ENCODE measurements at regions of chr11 and their contacts with region 1.

Region 1: GRCh38 chr11:95150946-95151684 is 61.5 kb downstream of the ENDOD1 start:
- DNase-seq: peak; percentile 93 to 95 (median 93)
- ATAC-seq: peak; percentile 90
- H3K4me3 ChIP-seq: peak overlapping the region; percentile 25
- H3K4me1 ChIP-seq: peaks cover 6% of the 10 kb centered on the region
- CTCF ChIP-seq: peak; percentile 56

Region 2: DNA sequence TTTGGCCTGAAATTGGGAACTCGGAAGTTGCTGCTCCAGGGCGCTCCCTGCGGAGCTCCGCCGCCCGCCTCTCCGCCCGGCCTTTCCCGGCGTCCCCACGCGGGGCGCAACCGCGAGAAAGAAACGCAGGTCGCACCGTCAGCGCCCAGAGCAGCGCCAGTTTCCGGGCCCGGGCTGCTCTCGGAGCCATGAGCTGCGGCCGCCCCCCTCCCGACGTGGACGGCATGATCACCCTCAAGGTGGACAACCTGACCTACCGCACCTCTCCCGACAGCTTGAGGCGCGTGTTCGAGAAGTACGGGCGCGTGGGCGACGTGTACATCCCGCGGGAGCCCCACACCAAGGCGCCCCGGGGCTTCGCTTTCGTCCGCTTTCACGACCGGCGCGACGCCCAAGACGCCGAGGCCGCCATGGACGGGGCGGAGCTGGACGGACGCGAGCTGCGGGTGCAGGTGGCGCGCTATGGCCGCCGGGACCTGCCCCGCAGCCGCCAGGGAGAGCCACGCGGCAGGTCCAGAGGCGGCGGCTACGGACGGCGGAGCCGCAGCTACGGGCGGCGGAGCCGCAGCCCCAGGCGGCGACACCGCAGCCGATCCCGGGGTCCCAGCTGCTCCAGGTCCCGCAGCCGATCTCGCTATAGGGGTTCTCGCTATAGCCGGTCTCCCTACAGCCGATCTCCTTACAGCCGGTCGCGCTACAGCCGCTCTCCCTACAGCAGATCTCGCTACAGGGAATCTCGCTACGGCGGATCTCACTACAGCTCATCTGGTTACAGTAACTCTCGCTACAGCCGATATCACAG is 83.9 kb before region 1 on chr11:
- intact Hi-C with region 1: loop called in 1 of 2 experiments (anchors 5 kb)
- DNase-seq: peak; percentile 83 to 89 (median 88)
- ATAC-seq: peak; percentile 84
- H3K4me3 ChIP-seq: peak overlapping the region; percentile 84
- H3K4me1 ChIP-seq: peaks cover 7% of the 10 kb centered on the region
- CTCF ChIP-seq: peak; percentile 41

Region 3: GRCh38 chr11:95705485-95706124 is 554.5 kb after region 1 on chr11:
- intact Hi-C with region 1: loop called (anchors 2 to 5 kb)
- DNase-seq: peak; percentile 81 to 92 (median 84)
- ATAC-seq: peak; percentile 98
- H3K4me3 ChIP-seq: no peak overlapping the region
- H3K4me1 ChIP-seq: peaks cover 3% of the 10 kb centered on the region
- CTCF ChIP-seq: peak; percentile 80

Region 4: GRCh38 chr11:95764267-95764898 is 613.3 kb after region 1 on chr11:
- intact Hi-C with region 1: loop called (anchors 5 kb)
- DNase-seq: no peak
- ATAC-seq: peak; percentile 71
- H3K4me3 ChIP-seq: no peak overlapping the region
- H3K4me1 ChIP-seq: no peaks in the 10 kb centered on the region
- CTCF ChIP-seq: no peak